CD8-positive, alpha-beta T cell (primary cell): ENCODE measurements at regions of chr9 and their contacts with region 1.

Region 1: DNA sequence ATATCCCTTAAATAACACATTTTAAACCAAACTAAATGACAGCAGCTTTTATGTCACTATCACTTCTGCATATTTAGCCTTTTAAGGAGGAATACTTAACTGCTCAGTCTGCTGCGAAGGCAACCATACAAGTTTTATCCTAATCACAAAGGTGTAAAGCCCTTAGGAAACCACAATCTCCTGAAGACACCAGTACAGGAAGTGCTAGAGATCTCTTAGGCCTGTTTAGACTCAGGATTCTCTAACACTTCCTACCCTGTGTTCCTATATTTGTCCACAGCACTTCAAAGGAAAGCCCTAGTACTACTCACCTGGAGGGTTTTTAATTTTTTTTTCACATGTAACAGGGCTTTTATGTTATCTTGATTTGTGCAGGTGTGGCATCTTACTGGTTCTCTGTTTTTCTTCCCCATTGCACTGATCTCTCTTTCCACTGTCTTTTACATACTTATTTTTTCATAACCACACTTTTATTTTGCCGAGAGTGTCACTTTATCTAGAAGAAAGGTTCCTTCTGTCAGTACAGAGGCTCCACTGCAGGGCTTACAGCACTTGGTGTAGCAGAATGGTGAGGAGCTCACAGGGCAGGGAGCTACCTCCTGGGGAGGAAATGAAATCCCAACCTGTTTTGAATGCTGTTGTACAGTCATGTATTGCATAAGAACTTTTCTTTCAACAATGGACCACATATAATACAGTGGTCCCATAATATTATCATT is 1060.6 kb upstream of the ACO1 start:
- DNase-seq: peak in 1 of 9 experiments; percentile 50
- ATAC-seq: peak; percentile 65
- H3K4me3 ChIP-seq: peak overlapping the region in 1 of 2 experiments; percentile 0
- H3K4me3 Mint-ChIP-seq: peak overlapping the region; percentile 54
- H3K27ac ChIP-seq: peak overlapping the region; percentile 1 to 65
- H3K27ac Mint-ChIP-seq: peak overlapping the region; percentile 90
- H3K4me1 ChIP-seq: peaks cover 33% of the 10 kb centered on the region
- H3K4me1 Mint-ChIP-seq: peaks cover 36% of the 10 kb centered on the region
- H3K27me3 ChIP-seq: no peaks in the 10 kb centered on the region
- H3K27me3 Mint-ChIP-seq: no peaks in the 10 kb centered on the region
- CTCF ChIP-seq: no peak

Region 2: DNA sequence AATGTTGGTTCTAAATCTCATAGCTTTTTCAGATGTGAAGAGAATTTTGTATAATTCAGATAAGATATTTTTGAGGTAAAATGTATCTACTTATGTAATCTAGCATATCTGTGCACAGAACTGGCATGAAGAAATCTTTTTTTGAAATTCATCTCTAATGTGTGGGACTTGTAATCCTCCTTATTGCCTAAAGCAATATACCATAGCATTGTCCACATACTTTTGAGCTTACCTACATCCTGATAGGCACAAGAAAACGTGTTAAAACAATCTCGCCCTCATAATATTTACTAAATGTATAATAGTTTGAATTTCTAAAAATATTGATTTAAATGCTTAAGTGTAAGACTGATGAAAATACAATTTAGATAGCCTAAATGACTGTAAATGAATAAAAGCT is 625.9 kb before region 1 on chr9:
- CTCF ChIA-PET with region 1: no interaction called
- POLR2A ChIA-PET with region 1: no interaction called
- intact Hi-C with region 1: no loop called
- DNase-seq: no peak
- ATAC-seq: no peak
- H3K4me3 ChIP-seq: no peak overlapping the region
- H3K4me3 Mint-ChIP-seq: no peak overlapping the region
- H3K27ac ChIP-seq: no peak overlapping the region
- H3K27ac Mint-ChIP-seq: no peak overlapping the region
- H3K4me1 ChIP-seq: no peaks in the 10 kb centered on the region
- H3K4me1 Mint-ChIP-seq: no peaks in the 10 kb centered on the region
- H3K27me3 ChIP-seq: no peaks in the 10 kb centered on the region
- H3K27me3 Mint-ChIP-seq: no peaks in the 10 kb centered on the region
- CTCF ChIP-seq: no peak

Region 3: GRCh38 chr9:31259824-31260223 is 64.1 kb before region 1 on chr9:
- CTCF ChIA-PET with region 1: no interaction called
- POLR2A ChIA-PET with region 1: no interaction called
- intact Hi-C with region 1: loop called in 1 of 2 experiments (anchors 10 kb)
- DNase-seq: peak in 3 of 9 experiments; percentile 6 to 80 (median 56)
- ATAC-seq: peak; percentile 87
- H3K4me3 ChIP-seq: no peak overlapping the region
- H3K4me3 Mint-ChIP-seq: peak overlapping the region; percentile 11
- H3K27ac ChIP-seq: no peak overlapping the region
- H3K27ac Mint-ChIP-seq: peak overlapping the region; percentile 81
- H3K4me1 ChIP-seq: peaks cover 20% of the 10 kb centered on the region
- H3K4me1 Mint-ChIP-seq: peaks cover 12% of the 10 kb centered on the region
- H3K27me3 ChIP-seq: no peaks in the 10 kb centered on the region
- H3K27me3 Mint-ChIP-seq: no peaks in the 10 kb centered on the region
- CTCF ChIP-seq: no peak

Region 4: DNA sequence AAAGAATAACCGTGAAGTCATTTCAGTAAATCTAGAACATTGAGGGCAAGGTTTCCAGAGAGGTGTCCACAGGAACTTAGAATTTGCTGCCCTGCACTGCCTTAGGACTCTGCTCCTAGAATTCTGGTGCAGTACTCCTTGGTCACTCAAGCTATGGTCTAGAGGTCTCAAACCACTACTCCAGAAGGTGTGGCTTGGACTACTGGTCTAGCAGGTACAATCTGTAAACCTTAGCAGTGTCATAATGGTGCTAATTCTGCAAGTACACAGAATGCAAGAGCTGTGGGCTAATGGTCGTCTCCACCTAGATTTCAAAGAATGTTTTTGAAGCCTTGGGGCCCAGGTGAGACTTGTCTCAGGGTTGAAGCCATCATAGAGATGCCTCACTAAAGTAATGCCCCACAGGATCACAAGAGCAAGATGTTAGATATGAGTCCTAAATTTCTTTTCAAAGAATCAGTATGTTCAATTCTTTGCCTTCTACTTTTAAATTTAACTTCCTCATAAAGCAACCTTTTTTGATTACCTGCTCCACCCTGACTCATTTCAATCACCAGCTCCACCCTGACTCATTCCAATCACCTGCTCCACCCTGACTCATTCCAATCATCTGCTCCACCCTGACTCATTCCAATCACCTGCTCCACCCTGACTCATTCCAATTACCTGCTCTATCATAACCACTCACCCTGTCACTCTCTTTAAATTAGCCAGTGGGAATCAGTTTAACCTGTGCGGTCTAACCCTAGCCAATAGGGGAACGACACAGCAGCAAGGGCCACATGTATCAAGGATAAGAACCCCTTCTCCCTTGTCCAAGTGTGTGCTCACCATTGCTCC is 51.2 kb before region 1 on chr9:
- CTCF ChIA-PET with region 1: no interaction called
- POLR2A ChIA-PET with region 1: no interaction called
- intact Hi-C with region 1: loop called (anchors 5 to 10 kb)
- DNase-seq: no peak
- ATAC-seq: no peak
- H3K4me3 ChIP-seq: no peak overlapping the region
- H3K4me3 Mint-ChIP-seq: no peak overlapping the region
- H3K27ac ChIP-seq: no peak overlapping the region
- H3K27ac Mint-ChIP-seq: no peak overlapping the region
- H3K4me1 ChIP-seq: no peaks in the 10 kb centered on the region
- H3K4me1 Mint-ChIP-seq: peaks cover 5% of the 10 kb centered on the region
- H3K27me3 ChIP-seq: no peaks in the 10 kb centered on the region
- H3K27me3 Mint-ChIP-seq: no peaks in the 10 kb centered on the region
- CTCF ChIP-seq: no peak

Region 5: DNA sequence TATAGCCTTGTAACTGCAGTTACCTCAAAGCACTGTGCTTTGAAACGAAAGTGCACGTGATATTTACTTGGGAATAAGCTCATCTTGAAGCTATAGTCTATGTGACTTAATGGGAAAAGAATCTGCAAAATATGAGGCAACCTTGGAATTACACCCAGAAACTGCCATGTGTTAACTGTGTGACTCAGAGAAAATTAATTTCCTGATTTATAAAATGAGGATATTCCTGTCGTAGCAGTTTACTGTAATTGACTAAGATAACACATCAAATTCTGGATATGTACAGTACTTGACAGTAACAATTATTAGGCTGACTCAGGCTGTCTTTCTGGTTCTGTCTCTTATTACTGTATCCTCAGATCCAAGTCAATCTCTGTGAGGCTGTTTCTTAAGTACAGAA is 19.3 kb before region 1 on chr9:
- CTCF ChIA-PET with region 1: interaction called, 3 read pairs
- POLR2A ChIA-PET with region 1: interaction called, 3 read pairs
- intact Hi-C with region 1: loop called in 1 of 2 experiments (anchors 2 kb)
- DNase-seq: no peak
- ATAC-seq: no peak
- H3K4me3 ChIP-seq: no peak overlapping the region
- H3K4me3 Mint-ChIP-seq: no peak overlapping the region
- H3K27ac ChIP-seq: no peak overlapping the region
- H3K27ac Mint-ChIP-seq: no peak overlapping the region
- H3K4me1 ChIP-seq: peaks cover 5% of the 10 kb centered on the region
- H3K4me1 Mint-ChIP-seq: peaks cover 28% of the 10 kb centered on the region
- H3K27me3 ChIP-seq: no peaks in the 10 kb centered on the region
- H3K27me3 Mint-ChIP-seq: no peaks in the 10 kb centered on the region
- CTCF ChIP-seq: no peak

Region 6: GRCh38 chr9:31335529-31336234 is 11.8 kb after region 1 on chr9:
- CTCF ChIA-PET with region 1: no interaction called
- POLR2A ChIA-PET with region 1: interaction called, 11 read pairs
- intact Hi-C with region 1: no loop called
- DNase-seq: peak in 1 of 9 experiments; percentile 36
- ATAC-seq: peak; percentile 17
- H3K4me3 ChIP-seq: no peak overlapping the region
- H3K4me3 Mint-ChIP-seq: peak overlapping the region; percentile 2
- H3K27ac ChIP-seq: peak overlapping the region; percentile 10 to 44
- H3K27ac Mint-ChIP-seq: peak overlapping the region; percentile 81
- H3K4me1 ChIP-seq: peaks cover 23% of the 10 kb centered on the region
- H3K4me1 Mint-ChIP-seq: peaks cover 24% of the 10 kb centered on the region
- H3K27me3 ChIP-seq: no peaks in the 10 kb centered on the region
- H3K27me3 Mint-ChIP-seq: no peaks in the 10 kb centered on the region
- CTCF ChIP-seq: no peak